ENCODE measurements at regions of chr10 and their contacts with region 1.

Region 1: DNA sequence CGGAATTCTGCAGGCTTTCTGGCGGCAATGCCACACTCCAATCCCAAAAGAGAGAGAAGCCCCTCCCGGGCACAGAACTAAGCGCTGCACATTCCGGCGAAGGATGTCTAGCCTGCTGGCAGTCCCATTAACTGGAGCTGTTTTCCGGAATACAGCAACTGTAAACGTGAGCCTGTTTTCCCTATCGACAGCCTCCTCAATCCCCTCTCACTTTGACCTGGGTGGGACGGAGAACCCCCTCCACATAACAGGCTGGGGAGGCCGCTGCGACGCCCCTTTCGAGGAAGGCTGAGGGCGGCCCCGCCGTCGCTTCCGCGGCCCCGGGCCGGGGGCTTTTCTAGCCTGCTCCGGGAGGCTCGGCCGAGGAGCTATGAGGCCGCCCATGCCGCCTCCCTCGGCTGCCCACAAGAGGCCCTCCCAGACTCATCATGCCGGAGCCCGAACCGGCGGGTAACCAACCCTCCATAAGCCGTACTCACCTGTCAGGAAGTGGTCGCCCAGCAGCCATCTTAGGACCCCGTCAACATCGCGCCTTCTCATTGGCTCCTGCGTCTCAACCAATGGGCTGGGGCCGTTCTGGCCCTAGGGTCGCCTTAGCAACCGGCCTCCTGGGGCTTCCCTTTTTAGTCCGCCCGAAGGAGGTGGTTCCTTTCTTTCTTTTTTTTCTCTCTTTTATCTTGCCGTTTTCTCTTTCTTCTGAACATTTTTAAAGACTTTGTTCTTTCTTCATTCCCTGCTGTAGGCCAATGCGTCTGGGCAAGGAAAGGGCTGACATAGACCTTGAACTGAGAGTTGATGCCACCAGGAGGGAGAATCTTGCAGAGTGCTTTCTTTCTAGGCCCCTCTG is at the start of gene FAM204A:
- DNase-seq: peak; percentile 95
- total RNA-seq, gene FAM204A: 62.7 TPM

Region 2: DNA sequence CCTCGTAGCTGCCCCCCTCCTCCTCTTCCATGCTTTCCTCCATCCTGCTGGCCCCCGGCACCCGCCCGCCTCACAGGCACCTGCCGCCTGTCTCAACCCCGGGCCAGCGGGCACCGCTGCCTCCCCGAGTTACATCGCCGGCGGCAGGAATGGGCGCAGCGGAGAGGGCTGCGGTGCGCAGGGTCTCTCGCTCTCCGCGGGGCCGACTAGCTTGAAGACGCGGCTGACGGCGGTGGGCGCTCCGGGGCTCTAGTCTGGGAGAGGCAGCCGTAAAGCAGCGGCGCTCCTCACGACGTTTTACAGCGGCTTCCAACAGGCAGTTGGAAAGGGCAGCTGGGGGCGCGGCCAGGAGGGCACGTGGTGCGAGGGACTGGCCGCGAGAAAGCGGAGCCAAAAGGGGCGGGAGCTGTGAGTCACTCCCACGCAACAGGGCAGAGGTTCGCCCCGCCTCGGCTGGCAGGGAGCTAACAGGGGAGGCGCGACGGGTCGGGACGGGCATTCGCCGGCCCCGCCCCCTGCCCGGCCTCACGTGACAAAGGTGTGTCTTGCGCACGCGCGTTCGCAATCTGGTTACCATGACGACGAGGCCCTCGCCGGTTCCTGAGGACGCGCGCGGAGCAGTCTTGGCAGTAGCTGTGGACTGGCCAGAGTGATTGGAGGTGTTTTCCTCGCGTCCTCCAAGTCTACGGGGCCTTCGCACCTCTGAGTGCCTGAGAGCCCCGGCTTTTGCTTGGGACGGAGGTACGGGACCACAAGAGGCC is 412.9 kb after region 1 on chr10 and contains the start of gene CACUL1:
- intact Hi-C with region 1: loop called (anchors 10 kb)
- DNase-seq: peak; percentile 100
- total RNA-seq, gene CACUL1: 31.6 TPM